ENCODE measurements at regions of chr1 and their contacts with region 1.

Region 1: GRCh38 chr1:28248283-28249012 is 10.9 kb upstream of the SESN2 start:
- DNase-seq: no peak
- ATAC-seq: peak; percentile 53
- H3K4me3 ChIP-seq: peak overlapping the region; percentile 3; the same call in 1 of the 2 replicates
- H3K27ac ChIP-seq: peak overlapping the region; percentile 87
- H3K4me1 ChIP-seq: peaks cover 39% of the 10 kb centered on the region
- H3K27me3 ChIP-seq: no peaks in the 10 kb centered on the region
- CTCF ChIP-seq: peak; percentile 86 to 98 (median 91)
- EP300 ChIP-seq: no peak
- POLR2A ChIP-seq: 0 out of 2 replicates have a peak, but pooled peaks have one; percentile 13
- RAD21 ChIP-seq: peak; percentile 87

Region 2: GRCh38 chr1:28208818-28209441 is 39.5 kb before region 1 on chr1:
- CTCF ChIA-PET with region 1: interaction called, 11 read pairs
- POLR2A ChIA-PET with region 1: interaction called, 4 read pairs
- RAD21 ChIA-PET with region 1: interaction called, 11 read pairs
- SMC1A ChIA-PET with region 1: interaction called, 11 read pairs
- in situ Hi-C with region 1: no loop called
- intact Hi-C with region 1: no loop called
- DNase-seq: peak; percentile 57
- ATAC-seq: peak; percentile 99
- H3K4me3 ChIP-seq: no peak overlapping the region
- H3K27ac ChIP-seq: no peak overlapping the region
- H3K4me1 ChIP-seq: no peaks in the 10 kb centered on the region
- H3K27me3 ChIP-seq: no peaks in the 10 kb centered on the region
- CTCF ChIP-seq: peak; percentile 72 to 92 (median 78); a peak in 5 of 6 replicates
- EP300 ChIP-seq: no peak
- POLR2A ChIP-seq: no peak
- RAD21 ChIP-seq: peak; percentile 99

Region 3: DNA sequence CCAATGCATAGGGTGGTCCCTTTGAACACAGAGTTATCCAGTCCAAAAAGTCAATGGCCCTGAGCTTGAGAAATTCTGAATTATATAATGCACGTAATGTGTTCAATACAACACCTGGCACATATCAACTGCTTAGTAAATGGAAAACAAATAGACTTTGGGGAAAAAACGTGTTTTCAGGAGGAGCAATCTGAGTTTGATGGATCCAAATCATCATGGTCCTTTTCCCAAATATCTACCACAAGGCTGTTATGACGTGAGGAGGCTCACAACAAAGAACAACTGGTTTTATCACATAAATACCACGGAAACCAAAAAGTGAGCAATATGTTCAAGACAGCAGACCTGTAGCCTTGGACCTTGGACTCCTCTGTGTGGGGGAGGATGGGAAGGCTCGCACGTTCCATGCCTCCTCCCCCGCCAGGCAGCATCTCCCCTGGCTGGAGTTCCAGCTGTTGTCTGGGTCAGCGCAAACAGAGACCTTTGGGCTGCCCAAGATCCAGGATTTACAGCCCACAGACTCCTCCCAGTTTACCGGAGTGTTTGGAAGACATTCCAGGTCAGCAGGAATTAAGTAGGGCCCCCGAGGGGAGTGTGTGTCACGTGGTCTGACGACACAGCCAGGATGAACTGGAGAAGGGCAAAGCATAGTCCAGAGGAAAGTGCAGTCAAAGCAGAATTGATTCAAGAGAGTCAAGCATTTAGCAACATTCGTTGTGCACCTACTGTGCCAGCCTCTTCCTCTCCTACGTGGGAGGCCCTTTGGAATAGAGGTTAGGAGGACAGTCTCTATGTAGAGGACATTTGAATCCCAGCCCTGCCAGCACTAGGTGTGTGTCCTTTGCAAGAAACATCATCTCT is 48.2 kb after region 1 on chr1:
- CTCF ChIA-PET with region 1: interaction called, 8 read pairs
- POLR2A ChIA-PET with region 1: no interaction called
- RAD21 ChIA-PET with region 1: interaction called, 5 read pairs
- SMC1A ChIA-PET with region 1: interaction called, 4 read pairs
- in situ Hi-C with region 1: no loop called
- intact Hi-C with region 1: loop called (anchors 5 kb)
- DNase-seq: no peak
- ATAC-seq: no peak
- H3K4me3 ChIP-seq: no peak overlapping the region
- H3K27ac ChIP-seq: no peak overlapping the region
- H3K4me1 ChIP-seq: no peaks in the 10 kb centered on the region
- H3K27me3 ChIP-seq: no peaks in the 10 kb centered on the region
- CTCF ChIP-seq: no peak
- EP300 ChIP-seq: no peak
- POLR2A ChIP-seq: no peak
- RAD21 ChIP-seq: no peak

Region 4: GRCh38 chr1:28369371-28370238 is 121.2 kb after region 1 on chr1 and contains the start of gene PHACTR4:
- CTCF ChIA-PET with region 1: interaction called, 37 read pairs
- POLR2A ChIA-PET with region 1: interaction called, 5 read pairs
- RAD21 ChIA-PET with region 1: interaction called, 31 read pairs
- SMC1A ChIA-PET with region 1: interaction called, 26 read pairs
- in situ Hi-C with region 1: no loop called
- intact Hi-C with region 1: loop called (anchors 1 kb)
- DNase-seq: peak; percentile 61
- ATAC-seq: peak; percentile 94
- H3K4me3 ChIP-seq: peak within 1 kb of the TSS; percentile 90
- H3K27ac ChIP-seq: peak within 1 kb of the TSS; percentile 85
- H3K4me1 ChIP-seq: peaks cover 13% of the 10 kb centered on the region
- H3K27me3 ChIP-seq: no peaks in the 10 kb centered on the region
- CTCF ChIP-seq: 0 out of 6 replicates have a peak, but pooled peaks of 1 of the 3 experiments have one; percentile 20
- EP300 ChIP-seq: 0 out of 4 replicates have a peak, but pooled peaks of 1 of the 2 experiments have one; percentile 17
- POLR2A ChIP-seq: peak; percentile 79
- RAD21 ChIP-seq: no peak
- polyA plus RNA-seq, gene PHACTR4: 8.9 to 9.3 TPM

Region 5: GRCh38 chr1:28510665-28511440 is 262.4 kb after region 1 on chr1:
- CTCF ChIA-PET with region 1: interaction called, 16 read pairs
- POLR2A ChIA-PET with region 1: interaction called, 4 read pairs
- RAD21 ChIA-PET with region 1: interaction called, 6 read pairs
- SMC1A ChIA-PET with region 1: interaction called, 8 read pairs
- in situ Hi-C with region 1: no loop called
- intact Hi-C with region 1: no loop called
- DNase-seq: no peak
- ATAC-seq: peak; percentile 11
- H3K4me3 ChIP-seq: peak overlapping the region; percentile 84
- H3K27ac ChIP-seq: peak overlapping the region; percentile 94
- H3K4me1 ChIP-seq: peaks cover 10% of the 10 kb centered on the region
- H3K27me3 ChIP-seq: no peaks in the 10 kb centered on the region
- CTCF ChIP-seq: no peak
- EP300 ChIP-seq: no peak
- POLR2A ChIP-seq: peak; percentile 67
- RAD21 ChIP-seq: no peak